ENCODE measurements at regions of chr3 and their contacts with region 1.

Region 1: GRCh38 chr3:122383771-122384697 is at the start of gene FAM162A:
- DNase-seq: peak; percentile 85 to 94
- ATAC-seq: peak; percentile 83 to 86
- H3K4me3 ChIP-seq: peak within 1 kb of the TSS; percentile 73 to 96 (median 86)
- H3K27ac ChIP-seq: peak within 1 kb of the TSS; percentile 89 to 97 (median 93)
- H3K4me1 ChIP-seq: peaks cover 24% of the 10 kb centered on the region in 2 donors
- H3K27me3 ChIP-seq: no peaks in the 10 kb centered on the region
- CTCF ChIP-seq: peak in 4 of 5 experiments; percentile 41 to 71 (median 56)
- POLR2A ChIP-seq: peak; percentile 93 to 95
- total RNA-seq, gene FAM162A: 18.8 to 52.4 (median 43.3) TPM

Region 2: DNA sequence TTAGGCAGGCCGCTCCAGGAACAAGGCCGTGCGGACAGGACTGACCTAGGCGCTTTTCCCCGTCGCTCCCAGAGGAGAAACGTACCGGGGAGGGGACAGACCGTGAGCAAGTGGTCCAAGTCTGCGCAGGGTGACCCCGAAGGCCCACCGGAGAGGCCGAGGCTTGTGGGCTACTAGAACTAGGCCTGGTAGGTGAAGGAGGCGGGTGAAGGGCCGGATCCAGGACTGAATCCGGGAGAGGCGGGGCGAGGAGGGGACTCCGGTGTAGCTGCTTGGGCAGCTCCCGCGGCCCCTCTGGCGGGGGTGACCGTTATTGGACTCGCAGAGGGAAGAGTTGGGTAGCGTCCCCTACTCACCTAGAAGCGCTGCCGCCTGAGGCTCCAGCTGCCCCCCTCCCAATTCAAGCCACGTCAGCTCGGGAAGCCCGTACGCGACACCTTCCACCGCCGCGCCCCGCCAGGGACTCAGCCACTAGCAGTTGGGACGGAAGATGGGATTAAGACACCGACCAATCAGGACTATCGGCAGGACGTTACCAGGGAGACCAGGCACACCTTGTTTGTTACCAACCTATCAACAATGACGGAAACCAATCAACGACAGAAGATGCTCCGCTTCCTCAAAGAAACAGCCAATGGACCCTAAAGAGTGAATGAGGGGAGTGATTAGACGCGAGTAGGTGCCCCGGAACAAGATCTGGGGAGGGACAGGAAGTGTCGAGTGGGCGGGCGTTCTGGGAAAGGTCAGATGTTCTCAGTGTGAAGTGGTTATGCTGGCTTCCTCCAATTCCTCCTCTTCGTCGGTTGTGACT is 634.6 kb before region 1 on chr3 and contains the start of gene GOLGB1:
- in situ Hi-C with region 1: no loop called
- intact Hi-C with region 1: loop called (anchors 10 kb)
- DNase-seq: peak; percentile 96 to 97
- ATAC-seq: peak; percentile 98 to 100
- H3K4me3 ChIP-seq: peak within 1 kb of the TSS; percentile 68 to 95 (median 92)
- H3K27ac ChIP-seq: peak within 1 kb of the TSS; percentile 86 to 93 (median 89)
- H3K4me1 ChIP-seq: peaks cover 24 to 28% of the 10 kb centered on the region in 2 donors
- H3K27me3 ChIP-seq: peaks cover 0 to 2% (median 0%) of the 10 kb centered on the region in 3 donors
- CTCF ChIP-seq: peak in 1 of 5 experiments; percentile 12
- POLR2A ChIP-seq: peak; percentile 98
- total RNA-seq, gene GOLGB1: 18.1 to 31.6 (median 26.7) TPM

Region 3: GRCh38 chr3:122415720-122416654 is 32.0 kb after region 1 on chr3 and contains the start of gene WDR5B:
- in situ Hi-C with region 1: no loop called
- intact Hi-C with region 1: loop called (anchors 1 kb)
- DNase-seq: peak; percentile 97 to 98
- ATAC-seq: peak; percentile 90
- H3K4me3 ChIP-seq: peak within 1 kb of the TSS; percentile 76 to 97 (median 77)
- H3K27ac ChIP-seq: peak within 1 kb of the TSS; percentile 88 to 98 (median 91)
- H3K4me1 ChIP-seq: peaks cover 35 to 43% of the 10 kb centered on the region in 2 donors
- H3K27me3 ChIP-seq: no peaks in the 10 kb centered on the region
- CTCF ChIP-seq: peak in 1 of 5 experiments; percentile 15
- POLR2A ChIP-seq: peak; percentile 90 to 93
- total RNA-seq, gene WDR5B: 1.4 to 3.0 (median 2.1) TPM

Region 4: DNA sequence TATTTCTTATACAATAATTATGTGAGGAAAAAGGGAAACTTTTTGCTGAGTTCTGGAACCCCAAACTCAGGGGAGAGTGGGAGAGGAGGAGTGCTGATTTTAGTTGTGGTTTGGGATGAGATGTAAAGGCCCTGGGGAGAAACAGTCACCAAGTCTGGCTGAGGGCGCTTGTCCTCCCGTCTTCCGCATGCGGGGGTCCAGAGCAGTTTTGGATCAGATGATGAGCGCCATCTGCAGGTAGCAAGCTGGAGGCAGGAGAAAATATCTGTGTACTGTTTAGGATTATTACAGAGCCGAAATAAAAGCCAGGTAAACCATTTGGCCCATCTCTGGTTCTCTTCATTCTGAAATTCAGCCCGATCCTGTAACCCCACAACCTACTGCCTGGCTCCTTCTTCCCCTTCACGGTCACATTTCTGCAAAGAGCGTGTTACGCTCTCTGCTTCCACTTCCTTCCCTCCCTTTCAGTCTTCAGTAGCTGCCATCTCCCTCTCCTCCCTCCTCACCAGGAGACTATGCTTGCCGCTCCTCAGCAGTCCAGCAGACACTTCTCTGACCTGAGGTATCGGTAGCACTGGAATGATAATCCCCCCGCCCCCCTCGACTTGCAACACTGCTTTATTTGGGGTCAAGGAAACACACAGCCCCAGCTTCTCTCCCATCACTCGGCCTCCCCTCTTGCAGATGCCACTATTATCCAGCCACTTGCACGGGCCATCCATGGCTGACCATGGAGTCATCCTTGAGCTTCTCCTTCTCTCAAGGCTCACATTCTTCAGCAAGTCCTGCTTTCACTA is 295.2 kb after region 1 on chr3:
- in situ Hi-C with region 1: no loop called
- intact Hi-C with region 1: loop called (anchors 2 kb)
- DNase-seq: peak; percentile 39 to 68
- ATAC-seq: peak; percentile 51 to 74
- H3K4me3 ChIP-seq: peak overlapping the region; percentile 84 to 98 (median 98)
- H3K27ac ChIP-seq: peak overlapping the region; percentile 84 to 87 (median 86)
- H3K4me1 ChIP-seq: peaks cover 21 to 24% of the 10 kb centered on the region in 2 donors
- H3K27me3 ChIP-seq: no peaks in the 10 kb centered on the region
- CTCF ChIP-seq: peak; percentile 71 to 84 (median 80)
- POLR2A ChIP-seq: no peak

Region 5: DNA sequence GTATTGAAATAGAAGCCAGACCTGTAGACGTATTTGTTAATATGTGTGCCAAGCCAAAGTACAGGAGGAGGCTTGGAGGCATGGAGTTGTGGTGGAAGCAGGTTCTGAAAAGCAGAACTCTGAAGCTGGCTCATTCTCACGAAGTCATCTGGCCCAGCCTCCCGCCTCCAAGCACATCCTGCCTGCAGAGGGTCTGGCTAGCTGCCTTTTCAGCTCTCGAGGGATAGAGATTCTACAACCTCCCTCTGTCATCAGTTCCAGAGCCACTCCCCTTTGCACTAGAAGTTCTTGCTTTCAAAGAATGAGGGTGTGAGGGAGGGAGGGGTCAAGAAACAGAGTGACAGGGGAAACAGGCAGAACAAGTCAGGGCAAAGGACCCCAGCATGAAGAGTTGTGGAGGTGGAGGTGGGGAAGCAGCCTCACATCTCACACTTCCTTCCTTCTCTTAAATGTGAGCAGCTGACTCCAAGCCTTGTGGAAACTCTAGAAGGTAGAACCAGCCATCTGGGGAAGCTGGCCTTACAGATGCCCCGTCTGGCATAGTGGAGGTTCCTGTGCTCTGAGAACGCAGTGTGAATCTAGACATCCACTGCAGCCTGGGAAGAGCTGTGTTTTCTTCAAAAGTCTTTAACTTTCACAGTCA is 506.2 kb after region 1 on chr3:
- in situ Hi-C with region 1: no loop called
- intact Hi-C with region 1: loop called (anchors 5 kb)
- DNase-seq: peak; percentile 54 to 57
- ATAC-seq: peak; percentile 26 to 44
- H3K4me3 ChIP-seq: no peak overlapping the region
- H3K27ac ChIP-seq: peak overlapping the region in 2 of 4 donors; percentile 34 to 60
- H3K4me1 ChIP-seq: peaks cover 43 to 44% of the 10 kb centered on the region in 2 donors
- H3K27me3 ChIP-seq: no peaks in the 10 kb centered on the region
- CTCF ChIP-seq: no peak
- POLR2A ChIP-seq: no peak

Region 6: DNA sequence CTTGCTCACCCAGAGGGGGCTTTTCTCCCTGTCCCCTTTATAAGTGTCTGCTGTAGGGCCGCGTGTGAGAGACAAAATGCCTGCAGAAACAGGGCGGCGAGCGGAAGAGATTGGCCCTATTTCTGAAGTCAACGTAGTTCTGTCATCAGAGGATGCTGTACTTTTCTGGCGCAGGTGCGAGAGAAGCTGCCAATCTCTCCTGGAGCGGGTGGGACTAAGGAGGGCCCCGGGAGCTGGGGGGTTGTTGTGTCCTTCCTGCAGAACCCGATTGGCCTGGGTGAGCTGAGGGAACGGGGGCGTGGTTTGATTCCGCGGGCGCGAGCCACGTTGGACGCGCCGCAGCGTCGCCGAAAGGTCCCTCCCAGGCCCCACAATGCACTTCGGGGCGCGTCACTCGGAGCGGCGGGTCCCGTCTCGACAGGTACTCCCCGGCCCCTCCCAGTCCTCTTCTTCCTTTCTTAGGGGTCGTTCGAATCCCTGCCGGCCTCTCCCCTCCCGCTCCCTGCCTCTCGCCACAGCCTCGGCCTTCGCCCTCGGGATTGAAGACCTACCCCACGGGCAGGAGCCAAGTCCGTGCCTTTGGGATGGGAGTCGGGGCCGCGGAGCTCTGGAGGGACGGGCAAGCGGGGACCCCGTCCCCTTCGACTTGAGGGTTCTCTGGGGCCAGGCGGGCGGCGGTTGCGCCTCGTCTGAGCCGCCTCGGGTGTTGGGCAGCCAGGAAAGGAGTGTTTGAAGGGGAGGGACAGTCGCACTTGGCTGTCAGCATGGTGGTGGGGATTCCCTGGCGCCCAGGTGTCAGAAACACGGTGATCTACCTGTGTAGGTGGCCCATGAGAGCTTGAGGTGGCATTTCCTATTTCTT is 817.8 kb after region 1 on chr3 and contains the start of gene SEC22A:
- in situ Hi-C with region 1: no loop called
- intact Hi-C with region 1: loop called (anchors 5 kb)
- DNase-seq: peak; percentile 80 to 87
- ATAC-seq: peak; percentile 96 to 97
- H3K4me3 ChIP-seq: peak within 1 kb of the TSS; percentile 84 to 99 (median 96)
- H3K27ac ChIP-seq: peak within 1 kb of the TSS; percentile 88 to 93 (median 92)
- H3K4me1 ChIP-seq: peaks cover 15% of the 10 kb centered on the region in 2 donors
- H3K27me3 ChIP-seq: no peaks in the 10 kb centered on the region
- CTCF ChIP-seq: no peak
- POLR2A ChIP-seq: peak; percentile 74 to 82
- total RNA-seq, gene SEC22A: 13.8 to 22.6 (median 16.8) TPM